Activated B cell treated with CpG ODN at 0.5 μM for 24 hours (primary cell): ENCODE measurements at regions of chr17 and their contacts with region 1.

Region 1: DNA sequence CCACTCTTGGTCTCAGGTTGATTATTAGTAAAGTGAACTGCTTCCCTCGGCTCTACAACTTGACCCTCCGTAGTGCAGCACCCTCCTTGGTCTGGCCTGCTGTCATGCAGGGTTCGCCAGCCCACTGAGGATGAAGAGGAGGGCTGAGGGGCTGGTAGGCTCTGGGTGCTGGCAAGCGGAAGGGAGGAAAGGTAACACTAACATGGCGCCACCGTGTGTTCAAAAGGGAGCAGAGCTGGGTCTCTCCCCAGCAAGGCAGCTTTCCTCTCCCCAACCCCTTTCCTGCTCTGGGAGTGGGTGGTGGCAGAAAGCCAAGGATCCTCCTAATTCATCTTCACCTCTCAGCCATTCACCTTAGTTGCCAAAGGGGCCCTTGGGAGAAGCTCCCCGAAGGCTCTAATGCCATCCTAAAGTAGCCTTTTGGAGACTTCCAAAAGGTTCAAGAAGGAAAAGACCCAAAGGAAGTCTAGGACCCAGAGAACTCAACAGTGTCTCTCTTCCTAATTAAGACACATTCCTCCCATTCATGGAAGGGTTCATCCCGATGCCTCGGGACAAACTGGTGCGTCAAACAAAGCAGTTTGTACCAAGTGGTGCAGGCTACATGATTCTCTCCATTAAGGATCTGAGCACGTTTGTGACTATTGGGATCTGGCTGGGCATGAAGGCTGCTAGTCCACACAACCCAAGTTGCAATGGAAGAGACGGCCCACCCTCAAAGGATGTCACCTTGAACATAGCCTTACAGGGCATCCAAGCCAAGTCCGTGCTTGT is 90.8 kb upstream of the TOB1 start:
- DNase-seq: peak; percentile 45
- ATAC-seq: peak; percentile 92
- H3K4me3 Mint-ChIP-seq: no peak overlapping the region
- H3K27ac Mint-ChIP-seq: no peak overlapping the region
- H3K4me1 Mint-ChIP-seq: peaks cover 2% of the 10 kb centered on the region
- H3K27me3 Mint-ChIP-seq: no peaks in the 10 kb centered on the region
- CTCF ChIP-seq: no peak

Region 2: DNA sequence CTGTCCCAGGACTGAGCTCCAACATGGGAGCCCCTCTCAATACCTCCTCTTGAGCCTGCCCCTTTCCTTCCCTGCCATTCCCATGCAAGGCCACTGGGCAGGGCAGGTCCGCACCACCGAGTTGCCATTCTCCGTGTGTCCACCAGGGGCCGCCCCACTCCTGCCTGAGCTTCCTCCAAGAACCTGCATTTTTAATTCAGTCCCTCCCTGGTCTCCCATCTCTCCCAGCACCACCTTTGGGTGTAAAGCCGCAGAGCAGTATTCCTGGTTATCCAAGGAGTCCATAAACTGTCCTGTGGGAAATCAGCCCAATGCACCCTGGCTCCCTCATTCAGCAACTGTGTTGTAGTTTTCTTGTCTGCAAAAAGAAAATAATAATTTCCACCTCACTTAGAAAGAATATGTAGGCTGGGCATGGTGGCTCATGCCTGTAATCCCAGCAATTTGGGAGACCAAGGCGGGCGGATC is 173.7 kb before region 1 on chr17:
- CTCF ChIA-PET with region 1: interaction called, 5 read pairs
- POLR2A ChIA-PET with region 1: no interaction called
- intact Hi-C with region 1: loop called (anchors 1 kb)
- DNase-seq: peak; percentile 76
- ATAC-seq: peak; percentile 99
- H3K4me3 Mint-ChIP-seq: no peak overlapping the region
- H3K27ac Mint-ChIP-seq: no peak overlapping the region
- H3K4me1 Mint-ChIP-seq: peaks cover 6% of the 10 kb centered on the region
- H3K27me3 Mint-ChIP-seq: peaks cover 9% of the 10 kb centered on the region
- CTCF ChIP-seq: peak; percentile 88

Region 3: GRCh38 chr17:50816771-50817751 is 139.9 kb before region 1 on chr17:
- CTCF ChIA-PET with region 1: no interaction called
- POLR2A ChIA-PET with region 1: no interaction called
- intact Hi-C with region 1: loop called (anchors 1 kb)
- DNase-seq: peak; percentile 52
- ATAC-seq: peak; percentile 58
- H3K4me3 Mint-ChIP-seq: no peak overlapping the region
- H3K27ac Mint-ChIP-seq: no peak overlapping the region
- H3K4me1 Mint-ChIP-seq: no peaks in the 10 kb centered on the region
- H3K27me3 Mint-ChIP-seq: peaks cover 20% of the 10 kb centered on the region
- CTCF ChIP-seq: peak; percentile 26

Region 4: DNA sequence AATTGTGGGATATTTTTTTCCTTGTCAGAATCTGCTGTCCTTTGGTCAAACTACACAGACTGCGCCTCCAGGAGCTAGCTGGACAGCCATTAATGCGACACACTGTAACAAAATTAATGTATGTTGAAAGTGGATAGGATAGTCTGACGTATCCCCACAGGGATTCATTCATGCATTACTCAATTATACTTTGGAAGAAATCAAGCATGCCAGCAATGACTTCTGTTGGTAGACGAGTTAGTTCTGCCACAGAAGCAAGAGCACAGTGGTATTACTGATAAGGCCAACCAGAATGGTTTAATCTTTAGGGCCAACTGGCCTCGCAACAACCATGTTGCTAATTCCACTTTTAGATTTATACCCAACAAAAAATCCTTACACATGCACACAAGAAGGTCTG is 15.6 kb after region 1 on chr17:
- CTCF ChIA-PET with region 1: no interaction called
- POLR2A ChIA-PET with region 1: no interaction called
- intact Hi-C with region 1: no loop called
- DNase-seq: no peak
- ATAC-seq: no peak
- H3K4me3 Mint-ChIP-seq: no peak overlapping the region
- H3K27ac Mint-ChIP-seq: no peak overlapping the region
- H3K4me1 Mint-ChIP-seq: no peaks in the 10 kb centered on the region
- H3K27me3 Mint-ChIP-seq: no peaks in the 10 kb centered on the region
- CTCF ChIP-seq: no peak

Region 5: DNA sequence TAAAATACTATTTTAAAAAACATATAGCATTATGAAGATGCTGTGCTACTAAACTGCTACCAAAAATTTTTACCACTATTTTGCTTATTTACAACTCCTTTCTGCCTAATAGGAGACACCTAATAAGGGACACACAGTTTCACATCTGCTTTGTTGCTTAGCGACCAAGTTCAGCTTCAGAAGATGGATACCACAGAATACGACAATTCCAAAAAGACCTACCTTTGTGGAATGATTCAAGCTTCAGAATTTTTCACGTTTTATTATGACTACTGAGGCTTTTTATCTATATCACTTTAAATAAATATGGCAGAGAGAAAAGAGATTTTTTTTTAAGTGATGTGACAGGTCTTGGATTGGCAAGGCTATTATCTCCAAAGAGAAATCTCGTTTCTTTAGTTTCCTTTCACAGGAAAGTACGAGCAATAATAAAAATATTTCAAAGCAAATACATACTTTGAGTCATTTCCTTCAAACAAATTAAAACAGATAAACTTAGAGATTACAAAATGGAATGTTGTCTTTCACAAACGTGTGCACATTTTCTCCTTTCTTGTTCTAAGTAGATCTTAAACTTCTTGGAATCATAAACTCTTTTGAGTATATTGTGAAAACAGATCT is 128.4 kb after region 1 on chr17:
- CTCF ChIA-PET with region 1: no interaction called
- POLR2A ChIA-PET with region 1: no interaction called
- intact Hi-C with region 1: no loop called
- DNase-seq: no peak
- ATAC-seq: no peak
- H3K4me3 Mint-ChIP-seq: no peak overlapping the region
- H3K27ac Mint-ChIP-seq: no peak overlapping the region
- H3K4me1 Mint-ChIP-seq: peaks cover 27% of the 10 kb centered on the region
- H3K27me3 Mint-ChIP-seq: no peaks in the 10 kb centered on the region
- CTCF ChIP-seq: no peak